ENCODE measurements at regions of chr17 and their contacts with region 1.

Region 1: DNA sequence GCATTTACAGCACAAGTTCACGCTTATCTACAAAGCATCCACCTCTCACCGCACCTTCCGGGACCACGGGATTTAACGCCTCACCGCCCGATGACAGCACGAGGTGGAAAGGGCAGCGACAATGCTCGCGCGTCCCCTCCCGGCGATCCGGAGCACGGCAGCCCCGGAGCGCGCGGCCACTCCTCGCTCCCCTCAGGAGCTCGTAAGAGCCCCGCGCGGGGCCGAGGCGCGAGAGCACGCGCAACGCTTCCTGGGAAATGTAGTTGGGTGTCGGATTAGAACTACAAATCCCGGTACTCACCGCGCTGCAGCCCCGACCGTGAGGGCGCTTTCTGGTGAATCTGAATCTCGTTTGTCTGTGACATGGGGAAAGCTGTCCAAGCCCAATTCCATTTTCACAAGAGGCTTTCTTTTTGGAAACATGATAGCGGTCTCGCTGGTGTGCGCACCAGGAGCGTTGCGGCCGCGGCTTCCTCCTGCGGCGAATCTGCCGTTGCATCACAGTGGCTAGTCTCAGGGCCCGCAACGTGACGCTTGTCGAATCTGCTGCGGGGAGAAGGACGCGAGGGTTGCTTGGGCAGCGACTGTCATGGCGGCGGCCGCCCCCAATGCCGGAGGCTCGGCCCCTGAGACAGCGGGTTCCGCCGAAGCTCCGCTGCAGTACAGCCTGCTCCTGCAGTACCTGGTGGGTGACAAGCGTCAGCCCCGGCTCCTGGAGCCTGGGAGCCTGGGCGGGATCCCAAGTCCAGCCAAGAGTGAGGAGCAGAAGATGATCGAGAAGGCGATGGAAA is at the start of gene TIMM22:
- DNase-seq: peak; percentile 91
- ATAC-seq: peak; percentile 92
- H3K4me3 Mint-ChIP-seq: peak within 1 kb of the TSS; percentile 98
- H3K27ac Mint-ChIP-seq: peak within 1 kb of the TSS; percentile 98
- H3K4me1 Mint-ChIP-seq: peaks cover 21% of the 10 kb centered on the region
- H3K27me3 Mint-ChIP-seq: no peaks in the 10 kb centered on the region
- CTCF ChIP-seq: peak; percentile 50
- total RNA-seq, gene TIMM22: 10.7 and 11.1 TPM in 2 replicates

Region 2: DNA sequence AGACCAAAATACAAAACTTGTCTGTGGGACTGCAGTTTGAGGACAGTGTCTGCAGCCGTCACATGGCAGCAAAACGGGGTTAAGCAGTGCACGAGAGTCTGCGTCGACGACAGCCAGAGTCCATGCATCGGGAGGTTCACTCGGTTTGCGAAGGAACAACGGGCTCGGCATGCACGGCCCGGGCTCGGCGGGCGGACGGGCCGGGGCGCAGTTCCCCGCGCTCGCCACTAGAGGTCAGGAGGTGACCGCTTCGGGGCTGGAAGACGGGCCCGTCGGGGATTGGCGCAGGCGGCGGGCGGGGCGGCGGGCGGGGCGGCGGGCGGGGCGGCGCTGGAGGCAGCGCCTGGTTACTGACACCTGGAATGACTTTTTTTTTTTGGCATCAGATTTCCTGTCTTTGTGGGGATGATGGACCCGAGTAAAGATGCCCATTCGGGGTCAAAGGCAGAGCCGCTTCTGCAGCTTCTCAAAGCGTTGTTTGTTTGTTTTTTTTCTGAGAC is 852.9 kb before region 1 on chr17:
- CTCF ChIA-PET with region 1: no interaction called
- POLR2A ChIA-PET with region 1: no interaction called
- intact Hi-C with region 1: loop called (anchors 5 kb)
- DNase-seq: peak; percentile 82
- ATAC-seq: peak; percentile 98
- H3K4me3 Mint-ChIP-seq: no peak overlapping the region
- H3K27ac Mint-ChIP-seq: no peak overlapping the region
- H3K4me1 Mint-ChIP-seq: peaks cover 4% of the 10 kb centered on the region
- H3K27me3 Mint-ChIP-seq: peaks cover 3% of the 10 kb centered on the region
- CTCF ChIP-seq: peak; percentile 42

Region 3: DNA sequence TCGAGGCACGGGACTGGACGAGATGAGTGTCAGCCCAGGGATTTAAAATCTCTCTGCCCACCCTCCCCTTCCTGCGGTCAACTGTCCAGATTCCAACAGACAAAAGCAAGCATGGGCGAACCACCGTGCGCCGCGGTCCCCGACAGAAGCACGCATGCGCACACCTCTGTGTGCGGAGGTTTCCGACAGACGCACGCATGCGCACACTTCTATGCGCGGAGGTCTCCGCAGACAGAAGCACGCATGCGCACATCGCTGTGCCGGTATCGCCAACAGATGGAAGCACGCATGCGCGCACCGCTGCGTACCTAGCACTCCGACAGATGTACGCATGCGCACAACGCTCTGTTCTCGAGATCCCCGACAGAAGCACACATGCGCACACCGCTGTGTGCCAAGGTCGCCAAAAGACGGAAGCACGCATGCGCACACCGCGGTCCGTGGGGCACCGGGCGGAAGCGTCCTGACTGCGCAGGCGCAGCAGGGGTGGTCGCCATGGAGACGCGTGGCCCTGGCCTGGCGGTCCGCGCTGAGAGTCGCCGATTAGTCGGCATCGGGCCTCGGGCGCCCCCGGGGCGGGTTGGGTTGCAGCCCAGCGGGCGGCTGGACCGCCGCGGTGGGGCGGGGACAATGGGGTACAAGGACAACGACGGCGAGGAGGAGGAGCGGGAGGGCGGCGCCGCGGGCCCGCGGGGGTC is 586.8 kb before region 1 on chr17:
- CTCF ChIA-PET with region 1: interaction called, 9 read pairs
- POLR2A ChIA-PET with region 1: interaction called, 3 read pairs
- intact Hi-C with region 1: loop called (anchors 1 kb)
- DNase-seq: peak; percentile 99
- ATAC-seq: peak; percentile 84
- H3K4me3 Mint-ChIP-seq: peak overlapping the region; percentile 88
- H3K27ac Mint-ChIP-seq: peak overlapping the region; percentile 91
- H3K4me1 Mint-ChIP-seq: peaks cover 47% of the 10 kb centered on the region
- H3K27me3 Mint-ChIP-seq: no peaks in the 10 kb centered on the region
- CTCF ChIP-seq: no peak

Region 4: GRCh38 chr17:781805-782731 is 214.7 kb before region 1 on chr17 and contains the starts of genes GLOD4 and MRM3:
- CTCF ChIA-PET with region 1: interaction called, 6 read pairs
- POLR2A ChIA-PET with region 1: interaction called, 11 read pairs
- intact Hi-C with region 1: loop called (anchors 1 kb)
- DNase-seq: peak; percentile 99
- ATAC-seq: peak; percentile 96
- H3K4me3 Mint-ChIP-seq: peak within 1 kb of the TSS; percentile 98
- H3K27ac Mint-ChIP-seq: peak within 1 kb of the TSS; percentile 94
- H3K4me1 Mint-ChIP-seq: peaks cover 38% of the 10 kb centered on the region
- H3K27me3 Mint-ChIP-seq: no peaks in the 10 kb centered on the region
- CTCF ChIP-seq: no peak
- total RNA-seq, gene GLOD4: 51.4 and 51.9 TPM in 2 replicates
- total RNA-seq, gene MRM3: 23.3 and 26.3 TPM in 2 replicates

Region 5: GRCh38 chr17:879549-880442 is 117.0 kb before region 1 on chr17:
- CTCF ChIA-PET with region 1: interaction called, 10 read pairs
- POLR2A ChIA-PET with region 1: interaction called, 3 read pairs
- intact Hi-C with region 1: loop called (anchors 1 kb)
- DNase-seq: peak; percentile 30
- ATAC-seq: peak; percentile 58
- H3K4me3 Mint-ChIP-seq: no peak overlapping the region
- H3K27ac Mint-ChIP-seq: no peak overlapping the region
- H3K4me1 Mint-ChIP-seq: peaks cover 7% of the 10 kb centered on the region
- H3K27me3 Mint-ChIP-seq: peaks cover 20% of the 10 kb centered on the region
- CTCF ChIP-seq: no peak

Region 6: DNA sequence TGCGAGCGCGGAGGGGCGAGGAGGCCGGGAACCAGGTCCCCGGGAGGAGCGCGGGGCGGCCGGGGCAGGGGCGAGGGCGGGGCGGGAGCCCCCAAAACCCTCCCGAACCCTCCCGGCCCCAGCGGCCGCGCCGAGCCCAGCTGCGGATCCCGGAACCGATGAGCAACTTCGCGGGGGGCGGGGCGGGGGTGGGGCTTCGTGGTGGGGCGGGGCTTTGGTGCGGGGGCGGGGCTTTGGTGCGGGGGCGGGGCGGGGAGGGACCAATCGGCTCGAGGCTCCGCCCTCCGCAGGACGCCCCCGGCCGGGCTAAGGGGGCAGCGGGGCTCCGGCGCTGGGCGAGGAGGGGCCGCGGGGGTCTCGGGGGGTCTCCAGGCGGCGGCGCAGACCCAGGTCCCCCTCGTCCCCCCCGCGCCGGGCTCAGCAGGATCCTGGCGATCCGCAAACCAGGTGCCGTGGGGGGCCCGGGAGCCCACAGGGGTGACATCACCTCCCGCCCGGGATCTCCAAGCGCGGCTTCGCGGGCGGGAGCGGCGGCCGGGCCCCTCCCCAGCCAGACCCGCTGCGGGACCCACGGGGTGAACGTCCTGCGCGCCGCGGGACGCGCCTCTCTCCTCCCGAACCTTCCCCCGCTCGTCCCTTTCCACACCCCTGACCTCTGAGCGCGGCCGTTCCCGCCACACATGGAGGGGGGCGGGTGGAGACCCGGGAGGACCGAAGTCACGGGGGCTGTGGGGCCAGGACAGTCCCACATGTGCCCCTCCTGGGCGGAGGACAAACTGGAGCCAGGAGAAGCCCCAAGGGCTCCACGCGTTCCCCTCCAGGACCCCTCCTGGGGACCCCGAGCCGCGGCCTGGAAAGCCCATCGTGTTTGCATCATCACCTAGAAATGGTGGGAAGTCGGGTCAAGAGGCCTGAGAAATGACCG is 183.3 kb after region 1 on chr17 and contains the start of gene ABR:
- CTCF ChIA-PET with region 1: no interaction called
- POLR2A ChIA-PET with region 1: no interaction called
- intact Hi-C with region 1: loop called (anchors 5 kb)
- DNase-seq: peak; percentile 55
- ATAC-seq: peak; percentile 5
- H3K4me3 Mint-ChIP-seq: peak within 1 kb of the TSS; percentile 72
- H3K27ac Mint-ChIP-seq: no peak within 1 kb of the TSS
- H3K4me1 Mint-ChIP-seq: peaks cover 54% of the 10 kb centered on the region
- H3K27me3 Mint-ChIP-seq: no peaks in the 10 kb centered on the region
- CTCF ChIP-seq: no peak
- total RNA-seq, gene ABR: 132 and 150 TPM in 2 replicates